HCT116 (cell line): ENCODE measurements at regions of chr17 and their contacts with region 1.

Region 1: DNA sequence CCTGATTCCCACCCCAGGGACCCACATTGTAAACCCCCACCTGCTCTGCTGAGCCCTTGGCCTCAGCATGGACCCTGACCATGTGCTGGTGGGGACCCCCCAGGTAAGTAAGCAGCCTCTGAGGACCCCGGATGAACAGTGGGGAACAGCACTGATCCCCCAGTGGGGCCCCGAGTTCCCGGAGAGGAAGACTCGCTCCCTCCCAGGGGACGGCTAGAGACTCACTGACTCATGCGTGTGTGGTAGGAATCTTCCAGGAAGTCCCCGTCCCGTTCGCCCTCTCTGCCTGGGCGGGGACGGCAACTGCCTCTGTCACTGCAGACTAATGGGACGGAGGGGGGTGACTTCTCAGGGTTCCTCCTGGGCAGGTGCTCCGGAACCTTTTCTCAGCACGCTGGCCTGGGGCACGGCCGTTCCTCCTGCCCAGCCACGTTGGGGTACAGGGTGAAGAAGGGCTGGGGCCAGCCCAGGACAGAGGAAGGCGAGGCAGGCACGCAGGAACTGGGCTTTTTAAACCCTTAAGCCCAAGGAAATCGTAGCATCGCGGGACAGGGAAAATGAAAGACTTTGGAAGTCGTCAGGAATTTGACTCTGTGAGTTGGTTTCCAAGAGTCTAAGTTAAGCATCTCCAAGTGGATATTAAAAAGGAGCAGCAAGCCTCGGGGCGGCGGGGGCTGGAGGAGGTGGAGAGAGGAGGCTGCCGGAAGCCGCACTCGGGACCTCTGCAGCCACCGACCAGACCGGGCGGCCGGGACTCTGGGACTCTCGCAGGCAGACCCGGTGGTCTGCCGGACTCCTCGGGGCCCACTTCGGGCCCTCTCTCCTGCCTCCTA is 178.7 kb downstream of the SEC14L1 start:
- DNase-seq: peak; percentile 85
- ATAC-seq: peak; percentile 74
- H3K4me3 ChIP-seq: peak overlapping the region; percentile 34 to 46
- H3K27ac ChIP-seq: peak overlapping the region; percentile 75
- H3K4me1 ChIP-seq: peaks cover 69 to 95% of the 10 kb centered on the region in 2 experiments
- H3K27me3 ChIP-seq: no peaks in the 10 kb centered on the region
- CTCF ChIP-seq: no peak
- POLR2A ChIP-seq: peak; percentile 78
- RAD21 ChIP-seq: no peak; the same call in 1 of the 2 replicates

Region 2: GRCh38 chr17:77287432-77288071 is 31.9 kb before region 1 on chr17:
- CTCF ChIA-PET with region 1: interaction called, 3 read pairs
- POLR2A ChIA-PET with region 1: interaction called, 5 read pairs
- RAD21 ChIA-PET with region 1: interaction called, 5 to 7 read pairs
- intact Hi-C with region 1: loop called (anchors 1 kb)
- DNase-seq: peak; percentile 92
- ATAC-seq: peak; percentile 60
- H3K4me3 ChIP-seq: peak overlapping the region; percentile 39 to 52
- H3K27ac ChIP-seq: peak overlapping the region; percentile 98
- H3K4me1 ChIP-seq: peaks cover 79 to 95% of the 10 kb centered on the region in 2 experiments
- H3K27me3 ChIP-seq: no peaks in the 10 kb centered on the region
- CTCF ChIP-seq: no peak
- POLR2A ChIP-seq: no peak
- RAD21 ChIP-seq: no peak